ENCODE measurements at regions of chr5 and their contacts with region 1.

Region 1: DNA sequence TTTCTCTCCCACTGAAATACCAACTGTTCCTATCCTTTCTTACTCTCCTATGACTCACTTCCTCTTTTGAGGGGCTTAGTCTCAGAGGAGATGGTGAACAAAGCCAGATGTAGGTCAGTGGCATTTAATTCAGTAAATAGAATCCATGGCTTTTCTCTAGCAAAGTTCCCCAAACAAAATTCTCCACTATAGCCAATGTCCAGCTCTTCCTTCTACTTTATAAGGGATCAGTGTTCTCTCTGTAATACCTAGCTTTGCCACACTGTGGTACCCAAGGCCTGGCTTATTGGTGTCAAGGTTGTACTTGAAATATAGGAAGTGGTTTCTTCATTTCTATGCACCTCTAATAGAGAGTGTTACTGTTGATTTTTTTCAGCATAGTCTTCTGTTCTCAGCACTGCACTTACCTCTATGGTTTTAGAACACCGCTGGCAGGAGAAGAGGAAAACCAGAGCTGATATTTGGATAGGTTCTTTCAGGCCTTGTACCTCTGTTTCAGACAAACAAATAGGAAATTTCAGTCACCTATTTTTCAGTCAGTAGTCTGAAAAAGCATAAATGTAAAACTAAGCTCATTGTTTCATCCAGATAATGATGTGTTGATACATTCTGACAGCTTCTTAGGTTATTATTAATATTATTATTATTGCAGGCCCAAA is 40.6 kb upstream of the ITGA2 start:
- DNase-seq: peak; percentile 89
- ATAC-seq: peak; percentile 90
- H3K4me3 ChIP-seq: no peak overlapping the region
- H3K27ac ChIP-seq: no peak overlapping the region; the same call in 1 of the 2 replicates
- H3K4me1 ChIP-seq: peaks cover 7% of the 10 kb centered on the region
- H3K27me3 ChIP-seq: no peaks in the 10 kb centered on the region
- CTCF ChIP-seq: peak; percentile 81
- POLR2A ChIP-seq: no peak
- RAD21 ChIP-seq: peak; percentile 94

Region 2: GRCh38 chr5:52896534-52897237 is 51.9 kb before region 1 on chr5:
- CTCF ChIA-PET with region 1: no interaction called
- POLR2A ChIA-PET with region 1: no interaction called
- dilution Hi-C with region 1: no loop called
- in situ Hi-C with region 1: no loop called
- intact Hi-C with region 1: no loop called
- DNase-seq: no peak
- ATAC-seq: no peak
- H3K4me3 ChIP-seq: no peak overlapping the region
- H3K27ac ChIP-seq: no peak overlapping the region
- H3K4me1 ChIP-seq: peaks cover 9% of the 10 kb centered on the region
- H3K27me3 ChIP-seq: no peaks in the 10 kb centered on the region
- CTCF ChIP-seq: no peak
- POLR2A ChIP-seq: no peak
- RAD21 ChIP-seq: no peak

Region 3: DNA sequence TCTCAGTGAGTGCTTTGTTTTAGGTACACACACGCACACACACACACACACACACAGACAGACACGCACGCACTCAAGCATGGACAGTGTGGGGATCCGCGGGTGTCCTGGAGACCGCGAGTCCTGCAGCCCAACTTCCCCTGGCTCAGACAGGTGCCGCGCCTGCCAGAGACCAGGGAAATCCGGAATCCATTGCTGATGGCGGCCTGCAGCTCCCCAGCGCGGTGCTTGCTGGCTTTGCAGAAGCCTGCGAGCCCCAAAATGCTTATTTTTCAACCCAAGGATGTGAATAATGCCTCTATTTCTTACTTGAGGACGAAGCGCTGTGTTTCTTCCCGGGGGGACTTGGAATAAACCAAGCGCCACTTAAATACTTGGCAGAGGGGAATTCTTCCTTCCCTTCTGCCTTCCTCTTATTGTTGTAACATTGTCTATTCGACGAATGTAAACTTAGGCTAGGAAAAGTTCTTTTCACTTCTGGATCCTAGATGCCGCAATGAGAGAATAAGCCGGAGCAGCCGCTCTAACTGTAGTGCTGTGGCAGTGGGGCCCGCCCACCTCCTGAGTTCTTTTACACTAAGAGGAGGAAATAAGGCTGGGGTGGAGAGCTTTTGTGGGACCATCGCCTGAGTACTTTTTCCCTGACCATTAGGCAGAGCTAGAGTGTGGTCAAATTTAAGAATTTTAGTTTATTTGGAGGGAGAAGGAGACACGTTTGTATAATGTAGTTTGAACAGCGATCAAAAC is 41.4 kb after region 1 on chr5:
- CTCF ChIA-PET with region 1: interaction called, 4 read pairs
- POLR2A ChIA-PET with region 1: interaction called, 8 read pairs
- dilution Hi-C with region 1: no loop called
- in situ Hi-C with region 1: no loop called
- intact Hi-C with region 1: loop called (anchors 2 kb)
- DNase-seq: peak; percentile 60
- ATAC-seq: peak; percentile 47
- H3K4me3 ChIP-seq: peak overlapping the region; percentile 93
- H3K27ac ChIP-seq: peak overlapping the region; percentile 56
- H3K4me1 ChIP-seq: peaks cover 16% of the 10 kb centered on the region; the same call in 1 of the 2 replicates
- H3K27me3 ChIP-seq: no peaks in the 10 kb centered on the region
- CTCF ChIP-seq: peak; percentile 50
- POLR2A ChIP-seq: no peak
- RAD21 ChIP-seq: peak; percentile 63

Region 4: DNA sequence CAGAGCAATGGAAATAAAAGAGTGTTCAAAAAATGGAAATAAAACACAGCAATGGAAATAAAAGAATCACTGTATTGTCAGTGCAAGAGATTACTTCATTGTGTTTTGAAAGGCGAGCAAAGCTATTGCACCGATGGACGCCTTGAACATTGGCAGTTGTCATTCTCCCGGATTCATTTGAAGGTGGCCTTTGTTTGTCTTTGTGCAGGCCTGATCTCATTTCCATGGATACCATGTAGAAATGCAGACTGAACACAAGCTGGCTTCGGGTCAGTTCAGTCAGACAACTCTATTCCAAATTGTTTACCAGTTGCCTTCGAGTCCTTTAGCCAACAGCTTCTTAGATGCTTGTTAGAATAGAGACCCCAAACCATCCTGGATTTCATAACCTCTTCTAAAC is 48.9 kb after region 1 on chr5:
- CTCF ChIA-PET with region 1: interaction called, 3 read pairs
- POLR2A ChIA-PET with region 1: interaction called, 12 read pairs
- dilution Hi-C with region 1: no loop called
- in situ Hi-C with region 1: no loop called
- intact Hi-C with region 1: no loop called
- DNase-seq: no peak
- ATAC-seq: no peak
- H3K4me3 ChIP-seq: no peak overlapping the region
- H3K27ac ChIP-seq: peak overlapping the region; percentile 5; the same call in 1 of the 2 replicates
- H3K4me1 ChIP-seq: peaks cover 16% of the 10 kb centered on the region
- H3K27me3 ChIP-seq: no peaks in the 10 kb centered on the region
- CTCF ChIP-seq: no peak
- POLR2A ChIP-seq: no peak
- RAD21 ChIP-seq: no peak

Region 5: GRCh38 chr5:53069626-53070025 is 121.1 kb after region 1 on chr5:
- CTCF ChIA-PET with region 1: interaction called, 5 read pairs
- POLR2A ChIA-PET with region 1: no interaction called
- dilution Hi-C with region 1: loop called (anchors 25 kb)
- in situ Hi-C with region 1: no loop called
- intact Hi-C with region 1: loop called (anchors 2 kb)
- DNase-seq: peak; percentile 83
- ATAC-seq: 0 out of 2 replicates have a peak, but pooled peaks have one; percentile 18
- H3K4me3 ChIP-seq: no peak overlapping the region
- H3K27ac ChIP-seq: no peak overlapping the region
- H3K4me1 ChIP-seq: peaks cover 5% of the 10 kb centered on the region
- H3K27me3 ChIP-seq: no peaks in the 10 kb centered on the region
- CTCF ChIP-seq: no peak
- POLR2A ChIP-seq: no peak
- RAD21 ChIP-seq: no peak

Region 6: GRCh38 chr5:53095931-53096525 is 147.5 kb after region 1 on chr5:
- CTCF ChIA-PET with region 1: interaction called, 20 read pairs
- POLR2A ChIA-PET with region 1: no interaction called
- dilution Hi-C with region 1: no loop called
- in situ Hi-C with region 1: loop called (anchors 5 kb)
- intact Hi-C with region 1: loop called (anchors 1 kb)
- DNase-seq: peak; percentile 75
- ATAC-seq: peak; percentile 52
- H3K4me3 ChIP-seq: no peak overlapping the region
- H3K27ac ChIP-seq: no peak overlapping the region
- H3K4me1 ChIP-seq: peaks cover 7% of the 10 kb centered on the region; the same call in 1 of the 2 replicates
- H3K27me3 ChIP-seq: no peaks in the 10 kb centered on the region
- CTCF ChIP-seq: peak; percentile 77
- POLR2A ChIP-seq: no peak
- RAD21 ChIP-seq: peak; percentile 70

Region 7: DNA sequence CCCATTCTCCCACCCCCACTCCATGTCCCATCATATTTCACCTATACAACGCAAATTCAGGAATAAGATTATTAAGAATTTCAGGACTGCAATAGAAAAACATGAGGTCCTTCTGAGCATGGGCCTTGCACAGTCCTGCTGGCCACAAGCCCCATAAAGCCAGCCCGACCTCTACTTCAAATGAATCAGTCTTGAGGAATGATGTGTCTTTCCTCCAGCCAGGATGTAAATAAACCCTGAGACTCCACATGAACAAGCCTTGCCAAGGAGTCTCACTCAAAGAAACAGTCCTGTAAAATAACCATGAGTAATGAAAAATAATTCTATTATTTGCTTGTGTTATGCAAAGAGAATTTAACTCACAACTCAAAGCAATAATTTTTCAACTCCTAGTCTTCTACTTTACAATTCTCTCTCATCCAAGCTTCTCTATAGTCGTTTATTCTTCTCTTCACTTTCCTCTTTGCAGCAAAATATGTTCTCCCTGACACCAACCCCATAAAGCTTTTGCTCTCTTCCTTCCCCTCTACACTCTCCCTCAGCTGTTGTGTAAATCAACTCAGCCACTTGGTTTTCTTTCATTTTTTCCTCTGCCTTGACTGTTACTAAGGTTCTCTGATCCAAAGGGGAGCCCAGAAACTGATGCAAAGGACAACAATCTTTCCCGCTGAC is 301.1 kb after region 1 on chr5:
- CTCF ChIA-PET with region 1: no interaction called
- POLR2A ChIA-PET with region 1: interaction called, 3 read pairs
- dilution Hi-C with region 1: no loop called
- in situ Hi-C with region 1: no loop called
- intact Hi-C with region 1: loop called (anchors 5 kb)
- DNase-seq: peak; percentile 98
- ATAC-seq: peak; percentile 76
- H3K4me3 ChIP-seq: no peak overlapping the region
- H3K27ac ChIP-seq: peak overlapping the region; percentile 92
- H3K4me1 ChIP-seq: peaks cover 16% of the 10 kb centered on the region
- H3K27me3 ChIP-seq: no peaks in the 10 kb centered on the region
- CTCF ChIP-seq: no peak
- POLR2A ChIP-seq: no peak
- RAD21 ChIP-seq: no peak

Region 8: GRCh38 chr5:54234304-54234933 is 1285.9 kb after region 1 on chr5:
- CTCF ChIA-PET with region 1: no interaction called
- POLR2A ChIA-PET with region 1: no interaction called
- dilution Hi-C with region 1: no loop called
- in situ Hi-C with region 1: no loop called
- intact Hi-C with region 1: loop called (anchors 10 kb)
- DNase-seq: peak; percentile 73
- ATAC-seq: peak; percentile 70
- H3K4me3 ChIP-seq: no peak overlapping the region
- H3K27ac ChIP-seq: no peak overlapping the region
- H3K4me1 ChIP-seq: no peaks in the 10 kb centered on the region
- H3K27me3 ChIP-seq: no peaks in the 10 kb centered on the region; the same call in 1 of the 2 replicates
- CTCF ChIP-seq: peak; percentile 70
- POLR2A ChIP-seq: no peak
- RAD21 ChIP-seq: peak; percentile 57

Measured in IMR-90 (cell line).